GM13977 (cell line): ENCODE measurements at regions of chr12 and their contacts with region 1.

Region 1: GRCh38 chr12:6423267-6424007 is 21.3 kb upstream of the CD27 start:
- DNase-seq: peak; percentile 79
- CTCF ChIP-seq: peak; percentile 85

Region 2: GRCh38 chr12:6367065-6367968 is 56.1 kb before region 1 on chr12:
- in situ Hi-C with region 1: no loop called
- DNase-seq: peak; percentile 86
- CTCF ChIP-seq: peak; percentile 41

Region 3: DNA sequence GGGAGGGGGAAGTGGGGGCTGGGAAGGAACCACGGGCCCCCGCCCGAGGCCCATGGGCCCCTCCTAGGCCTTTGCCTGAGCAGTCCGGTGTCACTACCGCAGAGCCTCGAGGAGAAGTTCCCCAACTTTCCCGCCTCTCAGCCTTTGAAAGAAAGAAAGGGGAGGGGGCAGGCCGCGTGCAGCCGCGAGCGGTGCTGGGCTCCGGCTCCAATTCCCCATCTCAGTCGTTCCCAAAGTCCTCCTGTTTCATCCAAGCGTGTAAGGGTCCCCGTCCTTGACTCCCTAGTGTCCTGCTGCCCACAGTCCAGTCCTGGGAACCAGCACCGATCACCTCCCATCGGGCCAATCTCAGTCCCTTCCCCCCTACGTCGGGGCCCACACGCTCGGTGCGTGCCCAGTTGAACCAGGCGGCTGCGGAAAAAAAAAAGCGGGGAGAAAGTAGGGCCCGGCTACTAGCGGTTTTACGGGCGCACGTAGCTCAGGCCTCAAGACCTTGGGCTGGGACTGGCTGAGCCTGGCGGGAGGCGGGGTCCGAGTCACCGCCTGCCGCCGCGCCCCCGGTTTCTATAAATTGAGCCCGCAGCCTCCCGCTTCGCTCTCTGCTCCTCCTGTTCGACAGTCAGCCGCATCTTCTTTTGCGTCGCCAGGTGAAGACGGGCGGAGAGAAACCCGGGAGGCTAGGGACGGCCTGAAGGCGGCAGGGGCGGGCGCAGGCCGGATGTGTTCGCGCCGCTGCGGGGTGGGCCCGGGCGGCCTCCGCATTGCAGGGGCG is 110.7 kb after region 1 on chr12 and contains the start of gene GAPDH:
- in situ Hi-C with region 1: loop called (anchors 10 kb)
- DNase-seq: peak; percentile 97
- CTCF ChIP-seq: no peak